Posterior vena cava (tissue), 2 donors: ENCODE measurements at regions of chr10 and their contacts with region 1.

Region 1: DNA sequence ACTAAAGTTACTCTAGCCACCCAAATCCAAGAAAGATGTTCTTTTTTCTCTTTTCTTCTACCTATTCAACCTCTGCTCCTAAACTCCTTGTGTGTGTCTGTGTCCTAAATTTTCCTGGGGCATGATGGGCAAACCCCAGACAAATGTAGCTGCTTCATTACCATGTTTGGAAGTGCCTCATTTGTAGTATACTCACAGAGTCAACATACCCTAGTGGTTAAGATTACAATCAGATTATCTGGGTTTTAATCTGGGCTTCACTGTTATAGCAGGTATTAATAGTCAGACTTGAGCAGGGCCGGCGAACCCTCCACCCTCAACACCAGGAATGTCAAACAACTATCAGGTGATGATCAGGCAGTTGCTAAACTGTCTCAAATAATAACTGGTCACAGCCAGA is 472.2 kb downstream of the IPMK start:
- DNase-seq: no peak

Region 2: GRCh38 chr10:57754803-57755202 is 40.7 kb before region 1 on chr10:
- intact Hi-C with region 1: no loop called
- DNase-seq: no peak

Region 3: DNA sequence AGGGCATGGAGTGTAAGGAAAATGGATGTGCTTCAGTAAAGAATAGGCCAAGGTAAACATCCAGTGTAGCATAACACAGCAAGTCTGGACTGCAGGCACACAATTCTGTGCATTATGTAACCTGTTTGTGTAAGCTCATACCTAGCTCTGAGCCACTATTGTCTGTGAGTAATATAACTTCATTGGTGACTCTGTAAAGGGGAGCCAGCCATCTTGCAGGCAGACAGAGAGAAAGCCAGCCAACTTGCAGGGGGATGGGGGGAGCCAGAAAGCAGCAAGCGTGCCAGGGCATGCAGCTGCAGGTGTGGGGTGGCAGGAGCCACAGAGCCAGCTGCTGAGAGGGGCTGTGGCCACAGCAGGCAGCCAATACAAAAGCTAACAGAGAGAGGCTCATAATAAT is 23.0 kb after region 1 on chr10:
- intact Hi-C with region 1: loop called in 1 of 2 experiments (anchors 2 kb)
- DNase-seq: no peak